Ascending aorta (tissue), 2 donors: ENCODE measurements at regions of chr3 and their contacts with region 1.

Region 1: DNA sequence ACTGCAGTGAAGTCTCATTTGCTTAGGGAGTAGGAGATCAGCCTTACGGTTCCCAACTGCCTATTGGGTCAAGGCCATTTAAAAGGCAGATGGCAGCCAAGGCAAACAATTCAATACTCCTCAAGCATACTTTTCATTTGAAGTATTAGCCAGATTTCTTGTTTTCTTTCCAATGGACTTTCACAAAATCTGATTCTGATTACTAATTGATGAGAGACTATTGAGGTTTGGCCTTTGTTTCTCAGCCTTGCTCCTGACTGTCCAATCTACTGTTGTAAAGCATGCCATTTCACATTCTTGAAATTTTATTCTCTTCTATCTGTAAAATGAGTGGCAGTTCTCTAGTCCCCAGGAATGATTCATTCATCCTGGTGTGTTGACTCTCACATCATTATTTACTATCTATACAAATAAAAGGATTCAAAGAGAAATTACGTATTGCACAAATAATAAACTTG is 166.2 kb upstream of the TGFBR2 start:
- DNase-seq: no peak
- H3K4me3 ChIP-seq: no peak overlapping the region
- H3K27ac ChIP-seq: peak overlapping the region; percentile 83 to 85
- H3K4me1 ChIP-seq: peaks cover 7 to 75% of the 10 kb centered on the region in 2 donors
- H3K27me3 ChIP-seq: no peaks in the 10 kb centered on the region
- CTCF ChIP-seq: no peak

Region 2: GRCh38 chr3:30286007-30286669 is 154.0 kb before region 1 on chr3:
- intact Hi-C with region 1: loop called (anchors 5 kb)
- DNase-seq: peak; percentile 21 to 89
- H3K4me3 ChIP-seq: no peak overlapping the region
- H3K27ac ChIP-seq: peak overlapping the region; percentile 58 to 73
- H3K4me1 ChIP-seq: peaks cover 6 to 29% of the 10 kb centered on the region in 2 donors
- H3K27me3 ChIP-seq: no peaks in the 10 kb centered on the region
- CTCF ChIP-seq: no peak

Region 3: DNA sequence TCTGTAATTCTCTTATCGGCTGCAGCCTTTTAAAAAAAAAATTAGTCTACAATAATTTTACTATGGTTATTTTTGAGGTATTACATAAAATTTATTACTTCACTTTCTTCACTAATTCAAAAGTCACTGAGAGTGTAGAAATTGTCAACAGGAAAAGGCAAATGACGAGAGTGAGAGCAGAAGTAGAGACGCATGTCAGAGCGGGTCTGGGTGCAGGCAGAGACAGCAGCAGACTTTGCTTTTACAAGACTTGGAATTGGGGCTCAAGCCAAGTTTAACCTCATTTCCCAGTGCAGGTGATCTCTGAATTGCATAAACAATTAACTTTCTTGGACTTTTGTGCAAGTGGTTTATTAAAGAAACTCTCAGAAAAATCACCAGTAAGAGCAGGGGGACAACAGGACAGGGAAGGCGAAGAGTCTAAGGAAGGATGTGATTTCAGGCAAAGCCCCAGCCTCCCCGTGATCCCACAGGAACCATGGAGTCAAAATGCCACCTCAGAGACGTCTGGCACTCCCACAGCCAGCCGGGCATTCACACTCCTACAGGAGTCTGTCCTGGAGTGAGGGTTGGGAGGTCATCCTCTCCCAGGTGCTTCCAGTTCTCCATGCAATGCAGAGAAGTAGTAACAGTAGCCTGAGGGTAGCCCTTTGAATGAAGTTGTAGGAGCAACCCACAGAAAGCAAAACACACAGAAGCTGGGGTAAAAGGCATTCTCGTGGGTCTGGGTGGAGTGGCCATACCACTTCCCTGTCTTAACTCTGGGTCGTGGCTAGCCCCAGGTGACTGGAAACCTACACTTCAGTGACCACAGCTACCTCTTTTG is 107.8 kb before region 1 on chr3:
- intact Hi-C with region 1: no loop called
- DNase-seq: no peak
- H3K4me3 ChIP-seq: no peak overlapping the region
- H3K27ac ChIP-seq: no peak overlapping the region
- H3K4me1 ChIP-seq: peaks cover 0 to 9% of the 10 kb centered on the region in 2 donors
- H3K27me3 ChIP-seq: no peaks in the 10 kb centered on the region
- CTCF ChIP-seq: no peak

Region 4: GRCh38 chr3:30342319-30343060 is 97.7 kb before region 1 on chr3:
- intact Hi-C with region 1: loop called (anchors 5 kb)
- DNase-seq: peak; percentile 20 to 79
- H3K4me3 ChIP-seq: no peak overlapping the region
- H3K27ac ChIP-seq: peak overlapping the region; percentile 68 to 70
- H3K4me1 ChIP-seq: peaks cover 0 to 18% of the 10 kb centered on the region in 2 donors
- H3K27me3 ChIP-seq: no peaks in the 10 kb centered on the region
- CTCF ChIP-seq: no peak

Region 5: DNA sequence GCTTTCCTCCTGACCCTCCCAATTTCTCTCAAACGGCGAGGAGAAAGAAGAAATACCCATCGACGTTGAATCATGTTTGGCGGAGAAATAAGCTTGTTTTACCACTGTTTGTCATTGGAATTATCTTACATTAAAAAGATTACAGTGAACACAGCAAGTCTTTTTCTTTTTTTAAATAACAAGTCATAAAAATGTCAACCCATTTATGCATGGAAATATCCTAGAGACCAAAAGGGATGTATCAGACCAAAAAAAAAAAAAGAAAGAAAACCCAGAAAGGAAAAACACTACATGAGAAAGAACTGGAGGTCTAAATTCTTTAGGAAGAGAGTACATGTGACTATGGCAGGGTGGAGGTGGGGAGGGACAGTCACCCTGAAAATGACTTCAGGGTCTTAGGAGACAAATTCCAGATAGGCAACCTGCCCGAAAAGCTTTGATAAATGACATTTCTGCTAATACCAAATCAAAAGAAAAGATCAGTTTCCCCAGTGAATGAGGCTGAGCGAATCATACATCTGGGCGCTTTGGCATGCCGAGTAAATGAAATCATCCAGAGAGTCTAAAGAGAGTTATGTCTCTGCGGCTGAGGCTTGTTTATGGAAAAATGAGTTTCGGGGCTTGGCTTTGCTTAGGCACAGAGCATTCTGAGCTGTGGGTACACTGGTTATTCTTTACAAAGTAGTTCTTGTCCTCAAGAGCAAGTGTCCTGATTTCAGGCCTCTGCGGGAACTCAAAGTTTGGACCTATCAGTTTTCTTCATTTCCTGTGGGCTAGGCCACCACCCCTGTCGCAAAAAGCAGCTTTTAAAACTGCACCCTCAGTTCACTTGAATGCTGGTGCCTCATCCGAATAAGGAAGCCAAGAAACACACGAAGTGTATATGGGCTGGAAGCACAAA is 56.1 kb after region 1 on chr3:
- intact Hi-C with region 1: loop called (anchors 2 kb)
- DNase-seq: peak in 1 of 2 donors; percentile 88
- H3K4me3 ChIP-seq: peak overlapping the region in 1 of 2 donors; percentile 0
- H3K27ac ChIP-seq: peak overlapping the region; percentile 85 to 92
- H3K4me1 ChIP-seq: peaks cover 32 to 72% of the 10 kb centered on the region in 2 donors
- H3K27me3 ChIP-seq: no peaks in the 10 kb centered on the region
- CTCF ChIP-seq: no peak

Region 6: DNA sequence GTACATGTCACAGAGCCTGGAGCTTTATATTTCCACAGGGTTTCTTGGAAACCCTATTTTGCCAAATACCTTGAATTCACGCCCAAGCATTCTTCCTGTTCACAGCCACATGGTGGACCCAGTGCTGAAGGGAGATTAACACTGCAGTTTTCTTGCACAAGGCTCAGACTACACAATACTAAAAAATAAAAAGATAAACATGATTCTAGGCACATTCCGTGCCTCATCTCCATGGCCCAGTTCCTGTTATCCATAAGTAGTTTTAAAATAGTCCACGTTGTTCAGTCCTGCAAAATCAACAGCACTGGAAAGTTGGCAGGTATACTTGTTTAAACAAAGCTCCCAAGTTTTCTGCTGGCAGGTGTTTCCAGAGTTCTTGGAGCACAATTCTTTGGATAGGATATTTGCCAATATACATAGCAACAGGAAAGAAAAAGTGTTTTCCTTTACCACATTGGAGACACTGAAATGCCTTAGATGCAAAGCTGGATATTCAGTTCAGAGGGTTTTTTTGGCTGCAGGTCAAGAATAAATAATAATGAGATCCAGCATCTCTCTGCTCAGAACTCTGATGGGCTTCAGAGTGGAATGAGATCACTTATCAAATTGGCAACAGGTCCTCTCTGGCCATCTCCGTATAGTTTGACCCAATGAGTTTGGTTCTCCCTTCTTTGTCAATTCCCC is 78.1 kb after region 1 on chr3:
- intact Hi-C with region 1: loop called (anchors 2 kb)
- DNase-seq: peak in 1 of 2 donors; percentile 89
- H3K4me3 ChIP-seq: no peak overlapping the region
- H3K27ac ChIP-seq: peak overlapping the region; percentile 72
- H3K4me1 ChIP-seq: peaks cover 3 to 33% of the 10 kb centered on the region in 2 donors
- H3K27me3 ChIP-seq: no peaks in the 10 kb centered on the region
- CTCF ChIP-seq: peak in 2 of 3 experiments; percentile 14 to 31